ENCODE measurements at regions of chr19 and their contacts with region 1.

Region 1: DNA sequence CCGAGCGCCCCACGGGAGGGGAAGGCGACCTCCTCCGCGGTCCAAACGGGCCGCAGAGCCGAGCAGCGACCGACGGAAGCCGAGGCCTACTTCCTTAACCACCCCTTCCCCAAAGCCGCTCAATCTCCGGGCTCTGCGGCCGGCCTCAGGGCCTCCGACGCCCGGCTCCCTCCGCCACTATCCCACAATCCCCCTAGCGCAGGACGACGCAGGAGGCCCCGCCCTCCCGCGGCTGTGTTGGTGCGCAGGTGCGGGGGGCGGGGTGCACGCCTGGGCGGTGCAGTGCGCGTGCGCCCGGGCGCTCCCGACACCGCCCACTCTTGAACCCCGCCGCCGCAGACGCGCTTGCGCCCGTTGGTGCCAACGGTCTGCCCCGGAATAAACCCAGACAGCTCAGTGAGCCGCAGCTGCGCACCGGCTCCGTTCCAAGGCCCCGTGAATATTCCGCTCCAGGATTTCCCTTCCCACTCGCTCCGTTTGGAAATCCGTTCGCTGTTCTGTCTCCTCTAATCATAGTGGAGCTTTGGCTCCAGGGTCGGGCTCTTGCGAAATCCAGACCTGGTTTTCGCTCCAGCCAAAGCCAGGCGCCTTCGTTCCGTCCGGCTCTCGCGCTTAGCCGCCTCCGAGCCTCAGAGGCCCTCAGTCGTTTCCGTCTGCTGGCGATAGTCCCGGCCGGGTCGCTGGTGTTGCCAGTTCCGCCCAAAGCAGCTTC is at the start of gene PPP6R1:
- DNase-seq: peak; percentile 86 to 98 (median 92)
- ATAC-seq: peak; percentile 81
- H3K4me3 ChIP-seq: peak within 1 kb of the TSS; percentile 80 to 93
- H3K4me3 Mint-ChIP-seq: peak within 1 kb of the TSS; percentile 94
- H3K27ac ChIP-seq: peak within 1 kb of the TSS; percentile 87 to 95
- H3K27ac Mint-ChIP-seq: peak within 1 kb of the TSS; percentile 98
- H3K4me1 ChIP-seq: peaks cover 37% of the 10 kb centered on the region
- H3K4me1 Mint-ChIP-seq: peaks cover 39% of the 10 kb centered on the region
- H3K27me3 ChIP-seq: no peaks in the 10 kb centered on the region
- H3K27me3 Mint-ChIP-seq: no peaks in the 10 kb centered on the region
- CTCF ChIP-seq: no peak
- total RNA-seq, gene PPP6R1: 163 to 172 TPM

Region 2: DNA sequence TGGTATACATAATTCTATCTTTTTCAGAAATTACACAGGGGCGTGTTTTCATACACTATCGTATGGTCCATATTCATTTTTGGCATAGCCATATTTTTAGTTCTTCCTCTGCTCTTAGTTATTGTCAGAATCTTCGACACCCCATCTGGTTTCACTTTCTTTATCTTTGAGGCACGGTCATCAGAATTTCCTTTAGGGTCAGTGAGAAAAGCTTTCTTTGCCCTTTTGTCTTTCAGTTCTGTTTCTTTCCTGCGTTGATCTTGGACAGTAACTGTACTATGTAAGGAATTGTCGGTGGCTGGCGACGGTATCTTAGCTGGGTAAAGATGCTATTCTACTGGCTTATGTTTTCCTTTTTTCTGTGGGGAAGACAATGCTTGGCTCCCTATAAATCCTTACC is 466.2 kb before region 1 on chr19:
- CTCF ChIA-PET with region 1: no interaction called
- POLR2A ChIA-PET with region 1: no interaction called
- intact Hi-C with region 1: no loop called
- DNase-seq: peak in 2 of 9 experiments; percentile 26 to 46
- ATAC-seq: no peak
- H3K4me3 ChIP-seq: peak overlapping the region; percentile 33 to 42
- H3K4me3 Mint-ChIP-seq: peak overlapping the region; percentile 71
- H3K27ac ChIP-seq: peak overlapping the region; percentile 26 to 72
- H3K27ac Mint-ChIP-seq: peak overlapping the region; percentile 12
- H3K4me1 ChIP-seq: no peaks in the 10 kb centered on the region
- H3K4me1 Mint-ChIP-seq: peaks cover 19% of the 10 kb centered on the region
- H3K27me3 ChIP-seq: no peaks in the 10 kb centered on the region
- H3K27me3 Mint-ChIP-seq: peaks cover 24% of the 10 kb centered on the region
- CTCF ChIP-seq: no peak

Region 3: DNA sequence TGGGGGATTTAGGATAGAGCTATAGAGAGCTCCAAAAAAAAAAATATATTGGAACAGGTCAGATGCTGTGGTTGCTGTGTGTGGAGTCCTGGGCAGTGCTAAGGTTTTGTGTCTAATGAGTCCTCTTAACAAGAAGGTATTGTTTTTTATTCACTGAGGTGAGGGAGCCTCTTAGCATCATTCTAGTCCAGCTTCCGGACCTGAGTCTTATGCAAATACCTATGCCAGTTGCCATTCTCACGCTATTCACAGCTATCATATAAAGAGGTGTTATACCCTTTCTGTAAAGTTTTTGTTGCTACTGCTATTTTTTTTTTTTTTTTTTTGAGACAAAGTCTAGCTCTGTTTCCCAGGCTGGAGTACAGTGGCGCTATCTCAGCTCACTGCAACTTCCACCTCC is 291.4 kb before region 1 on chr19:
- CTCF ChIA-PET with region 1: no interaction called
- POLR2A ChIA-PET with region 1: no interaction called
- intact Hi-C with region 1: no loop called
- DNase-seq: no peak
- ATAC-seq: no peak
- H3K4me3 ChIP-seq: no peak overlapping the region
- H3K4me3 Mint-ChIP-seq: no peak overlapping the region
- H3K27ac ChIP-seq: no peak overlapping the region
- H3K27ac Mint-ChIP-seq: no peak overlapping the region
- H3K4me1 ChIP-seq: no peaks in the 10 kb centered on the region
- H3K4me1 Mint-ChIP-seq: no peaks in the 10 kb centered on the region
- H3K27me3 ChIP-seq: no peaks in the 10 kb centered on the region
- H3K27me3 Mint-ChIP-seq: peaks cover 4% of the 10 kb centered on the region
- CTCF ChIP-seq: no peak

Region 4: GRCh38 chr19:55206664-55207500 is 52.1 kb before region 1 on chr19:
- CTCF ChIA-PET with region 1: interaction called, 3 read pairs
- POLR2A ChIA-PET with region 1: no interaction called
- intact Hi-C with region 1: loop called in 1 of 2 experiments (anchors 2 kb)
- DNase-seq: peak in 4 of 9 experiments; percentile 15 to 36 (median 29)
- ATAC-seq: no peak
- H3K4me3 ChIP-seq: no peak overlapping the region
- H3K4me3 Mint-ChIP-seq: no peak overlapping the region
- H3K27ac ChIP-seq: no peak overlapping the region
- H3K27ac Mint-ChIP-seq: no peak overlapping the region
- H3K4me1 ChIP-seq: no peaks in the 10 kb centered on the region
- H3K4me1 Mint-ChIP-seq: no peaks in the 10 kb centered on the region
- H3K27me3 ChIP-seq: no peaks in the 10 kb centered on the region
- H3K27me3 Mint-ChIP-seq: peaks cover 44% of the 10 kb centered on the region
- CTCF ChIP-seq: no peak

Region 5: DNA sequence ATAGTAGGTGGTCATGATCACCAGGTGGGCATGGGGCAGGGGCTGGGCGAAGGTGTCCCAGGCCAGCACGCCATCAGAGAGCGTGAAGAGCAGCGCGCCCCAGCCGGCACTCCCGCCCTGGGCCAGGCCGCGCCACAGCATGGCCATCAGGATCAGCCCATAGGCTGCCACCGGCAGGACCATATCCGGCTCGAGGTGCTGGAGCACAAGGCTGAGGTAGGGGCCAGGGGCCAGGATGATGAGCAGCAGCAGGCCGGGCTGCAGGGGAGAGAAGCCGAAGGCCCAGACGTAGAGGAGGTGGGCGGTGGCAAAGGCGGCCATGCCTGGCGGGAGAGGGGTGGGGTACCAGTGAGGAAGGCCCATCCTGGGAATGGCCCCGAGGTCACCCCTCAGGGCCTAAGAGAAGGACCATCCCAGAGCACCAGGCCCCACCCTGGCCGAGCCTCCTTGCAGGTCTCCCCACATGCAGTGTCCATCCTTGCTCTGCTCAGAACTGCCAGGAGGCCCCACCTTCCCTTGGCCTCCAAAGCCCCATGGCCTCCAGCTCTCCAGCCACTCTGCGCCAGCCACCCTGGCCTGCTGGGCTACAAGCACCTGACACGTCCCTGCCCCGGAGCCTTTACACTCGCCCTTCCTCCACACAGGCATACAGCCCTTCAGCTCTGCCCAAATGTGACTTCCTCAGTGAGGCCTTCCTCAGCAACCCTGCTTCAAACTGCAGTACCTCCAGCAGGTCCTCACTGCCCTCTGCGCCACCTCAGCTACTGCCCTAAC is 31.6 kb before region 1 on chr19:
- CTCF ChIA-PET with region 1: no interaction called
- POLR2A ChIA-PET with region 1: no interaction called
- intact Hi-C with region 1: no loop called
- DNase-seq: no peak
- ATAC-seq: no peak
- H3K4me3 ChIP-seq: no peak overlapping the region
- H3K4me3 Mint-ChIP-seq: no peak overlapping the region
- H3K27ac ChIP-seq: no peak overlapping the region
- H3K27ac Mint-ChIP-seq: no peak overlapping the region
- H3K4me1 ChIP-seq: no peaks in the 10 kb centered on the region
- H3K4me1 Mint-ChIP-seq: peaks cover 5% of the 10 kb centered on the region
- H3K27me3 ChIP-seq: no peaks in the 10 kb centered on the region
- H3K27me3 Mint-ChIP-seq: no peaks in the 10 kb centered on the region
- CTCF ChIP-seq: no peak

Region 6: GRCh38 chr19:55289117-55289796 is 30.3 kb after region 1 on chr19:
- CTCF ChIA-PET with region 1: interaction called, 10 read pairs
- POLR2A ChIA-PET with region 1: no interaction called
- intact Hi-C with region 1: no loop called
- DNase-seq: no peak
- ATAC-seq: no peak
- H3K4me3 ChIP-seq: no peak overlapping the region
- H3K4me3 Mint-ChIP-seq: no peak overlapping the region
- H3K27ac ChIP-seq: no peak overlapping the region
- H3K27ac Mint-ChIP-seq: no peak overlapping the region
- H3K4me1 ChIP-seq: peaks cover 4% of the 10 kb centered on the region
- H3K4me1 Mint-ChIP-seq: peaks cover 6% of the 10 kb centered on the region
- H3K27me3 ChIP-seq: no peaks in the 10 kb centered on the region
- H3K27me3 Mint-ChIP-seq: no peaks in the 10 kb centered on the region
- CTCF ChIP-seq: no peak

Region 7: GRCh38 chr19:55309437-55309836 is 50.5 kb after region 1 on chr19:
- CTCF ChIA-PET with region 1: no interaction called
- POLR2A ChIA-PET with region 1: no interaction called
- intact Hi-C with region 1: no loop called
- DNase-seq: no peak
- ATAC-seq: no peak
- H3K4me3 ChIP-seq: no peak overlapping the region
- H3K4me3 Mint-ChIP-seq: no peak overlapping the region
- H3K27ac ChIP-seq: no peak overlapping the region
- H3K27ac Mint-ChIP-seq: no peak overlapping the region
- H3K4me1 ChIP-seq: no peaks in the 10 kb centered on the region
- H3K4me1 Mint-ChIP-seq: peaks cover 4% of the 10 kb centered on the region
- H3K27me3 ChIP-seq: no peaks in the 10 kb centered on the region
- H3K27me3 Mint-ChIP-seq: no peaks in the 10 kb centered on the region
- CTCF ChIP-seq: no peak

Region 8: DNA sequence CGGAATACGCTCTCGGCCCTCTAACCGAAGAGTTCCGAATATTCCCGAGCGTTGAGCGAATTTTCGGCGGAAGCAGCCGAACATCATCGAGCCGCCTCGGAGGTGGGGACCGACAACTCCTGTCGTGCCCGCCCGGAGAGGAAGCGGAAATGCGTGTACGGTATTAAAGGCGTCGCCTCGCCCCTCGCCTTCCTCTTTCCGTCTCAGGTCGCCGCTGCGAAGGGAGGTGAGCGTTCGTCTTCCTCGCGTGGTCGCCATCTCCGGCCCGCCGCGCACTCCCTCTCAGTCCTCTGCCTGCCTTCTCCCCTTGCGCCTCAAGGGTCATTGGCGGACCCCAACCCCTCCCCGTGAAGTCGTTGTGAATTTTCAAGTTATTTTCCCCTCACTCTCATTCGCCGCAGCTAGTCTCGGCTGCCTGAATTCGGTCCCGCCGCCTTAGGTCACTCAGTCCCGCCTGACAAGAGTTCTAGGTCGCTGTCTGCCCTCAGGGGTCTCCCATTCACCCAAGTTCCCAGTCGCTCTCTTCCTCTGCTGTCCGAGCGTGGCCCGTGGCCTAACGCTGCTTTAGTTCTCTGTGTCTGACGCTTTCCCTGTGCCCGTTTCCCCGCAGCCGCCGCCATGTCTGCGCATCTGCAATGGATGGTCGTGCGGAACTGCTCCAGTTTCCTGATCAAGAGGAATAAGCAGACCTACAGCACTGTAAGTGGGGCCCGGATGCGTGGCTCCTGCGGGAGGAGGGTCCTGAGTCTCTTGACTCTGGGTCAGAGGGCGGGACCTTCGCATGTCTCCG is 127.0 kb after region 1 on chr19 and contains the start of gene RPL28:
- CTCF ChIA-PET with region 1: no interaction called
- POLR2A ChIA-PET with region 1: interaction called, 9 read pairs
- intact Hi-C with region 1: loop called (anchors 1 kb)
- DNase-seq: peak; percentile 97 to 99 (median 99)
- ATAC-seq: peak; percentile 80
- H3K4me3 ChIP-seq: peak within 1 kb of the TSS; percentile 75 to 94
- H3K4me3 Mint-ChIP-seq: peak within 1 kb of the TSS; percentile 100
- H3K27ac ChIP-seq: peak within 1 kb of the TSS; percentile 95 to 97
- H3K27ac Mint-ChIP-seq: peak within 1 kb of the TSS; percentile 100
- H3K4me1 ChIP-seq: peaks cover 59% of the 10 kb centered on the region
- H3K4me1 Mint-ChIP-seq: peaks cover 75% of the 10 kb centered on the region
- H3K27me3 ChIP-seq: no peaks in the 10 kb centered on the region
- H3K27me3 Mint-ChIP-seq: no peaks in the 10 kb centered on the region
- CTCF ChIP-seq: no peak
- total RNA-seq, gene RPL28: 4,227 to 4,270 TPM

Region 9: DNA sequence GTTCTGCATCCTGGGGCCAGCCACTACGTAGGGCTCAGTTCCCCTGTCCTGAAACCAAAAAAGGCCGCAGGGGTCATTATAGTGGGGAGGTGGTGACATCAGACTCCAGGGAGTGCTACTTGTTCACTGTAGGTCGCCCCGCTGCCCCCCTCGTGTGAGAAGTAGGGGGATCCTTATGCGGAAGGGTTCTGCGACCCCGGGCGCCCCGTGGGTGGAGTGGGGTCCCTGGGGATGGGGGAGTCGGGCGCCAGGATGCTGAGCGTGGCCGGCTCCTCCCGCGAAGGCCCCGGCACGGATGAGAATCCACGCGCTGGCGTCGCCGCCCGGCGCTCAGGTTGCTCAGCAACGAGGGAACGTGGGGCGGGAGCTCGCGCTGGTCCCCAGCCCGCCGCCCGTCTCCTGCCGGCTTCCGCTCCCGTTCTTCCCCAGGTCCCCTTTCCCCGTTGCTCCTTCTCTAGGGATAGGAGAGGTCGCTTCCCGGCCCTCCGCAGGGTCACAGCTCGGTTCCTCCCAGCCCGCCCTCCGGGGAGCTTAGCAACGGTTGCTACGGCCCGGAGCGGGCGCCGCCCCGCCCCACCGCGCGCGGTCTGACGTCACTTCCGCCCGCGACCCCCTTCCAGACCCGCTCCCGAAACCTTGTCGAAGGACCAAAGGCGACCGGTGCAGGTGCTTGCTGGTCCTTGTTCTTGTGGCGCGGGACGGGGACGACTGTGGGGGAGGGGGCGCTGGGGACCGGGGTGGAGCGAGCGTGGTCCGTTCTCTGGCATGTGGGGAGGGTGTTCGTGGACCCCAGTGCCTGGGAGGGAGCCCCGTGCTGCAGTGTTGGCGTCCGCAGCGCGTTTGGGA is 225.8 kb after region 1 on chr19 and contains the start of gene NAT14:
- CTCF ChIA-PET with region 1: no interaction called
- POLR2A ChIA-PET with region 1: no interaction called
- intact Hi-C with region 1: loop called in 1 of 2 experiments (anchors 1 kb)
- DNase-seq: peak; percentile 34 to 82 (median 63)
- ATAC-seq: peak; percentile 70
- H3K4me3 ChIP-seq: peak within 1 kb of the TSS; percentile 56 to 90
- H3K4me3 Mint-ChIP-seq: peak within 1 kb of the TSS; percentile 78
- H3K27ac ChIP-seq: peak within 1 kb of the TSS; percentile 70 to 81
- H3K27ac Mint-ChIP-seq: peak within 1 kb of the TSS; percentile 80
- H3K4me1 ChIP-seq: peaks cover 18% of the 10 kb centered on the region
- H3K4me1 Mint-ChIP-seq: peaks cover 15% of the 10 kb centered on the region
- H3K27me3 ChIP-seq: no peaks in the 10 kb centered on the region
- H3K27me3 Mint-ChIP-seq: no peaks in the 10 kb centered on the region
- CTCF ChIP-seq: no peak
- total RNA-seq, gene NAT14: 9.9 to 10.0 TPM

Region 10: DNA sequence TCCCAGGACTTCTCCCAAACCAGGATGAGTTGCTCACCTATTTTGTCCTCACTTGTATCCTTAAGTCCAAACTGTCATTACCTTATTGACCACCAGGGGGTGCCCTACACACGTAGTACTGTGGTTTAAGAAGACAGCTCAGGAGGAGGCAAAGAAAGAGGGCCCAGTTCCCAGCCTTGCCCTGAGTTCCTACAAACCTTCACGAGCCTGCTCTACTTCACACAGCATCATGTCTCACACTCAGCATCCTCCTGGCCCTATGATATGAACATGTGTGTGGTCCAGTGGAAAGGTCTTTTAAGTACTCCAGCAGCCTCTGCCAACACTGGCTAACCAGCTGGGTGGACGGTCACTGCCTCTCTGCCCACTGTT is 373.5 kb after region 1 on chr19:
- CTCF ChIA-PET with region 1: interaction called, 3 read pairs
- POLR2A ChIA-PET with region 1: no interaction called
- intact Hi-C with region 1: loop called in 1 of 2 experiments (anchors 10 kb)
- DNase-seq: peak; percentile 72 to 95 (median 89)
- ATAC-seq: peak; percentile 46
- H3K4me3 ChIP-seq: no peak overlapping the region
- H3K4me3 Mint-ChIP-seq: peak overlapping the region; percentile 23
- H3K27ac ChIP-seq: no peak overlapping the region
- H3K27ac Mint-ChIP-seq: peak overlapping the region; percentile 63
- H3K4me1 ChIP-seq: peaks cover 31% of the 10 kb centered on the region
- H3K4me1 Mint-ChIP-seq: peaks cover 40% of the 10 kb centered on the region
- H3K27me3 ChIP-seq: no peaks in the 10 kb centered on the region
- H3K27me3 Mint-ChIP-seq: no peaks in the 10 kb centered on the region
- CTCF ChIP-seq: peak; percentile 45

Measured in CD8-positive, alpha-beta T cell (primary cell).